Activated CD4-positive, alpha-beta T cell treated with anti-CD3 and anti-CD28 coated beads, Interleukin-2, amount 10 ng/mL, durations not matched to agents 7 days and 5 days (primary cell): ENCODE measurements at regions of chr1 and their contacts with region 1.

Region 1: DNA sequence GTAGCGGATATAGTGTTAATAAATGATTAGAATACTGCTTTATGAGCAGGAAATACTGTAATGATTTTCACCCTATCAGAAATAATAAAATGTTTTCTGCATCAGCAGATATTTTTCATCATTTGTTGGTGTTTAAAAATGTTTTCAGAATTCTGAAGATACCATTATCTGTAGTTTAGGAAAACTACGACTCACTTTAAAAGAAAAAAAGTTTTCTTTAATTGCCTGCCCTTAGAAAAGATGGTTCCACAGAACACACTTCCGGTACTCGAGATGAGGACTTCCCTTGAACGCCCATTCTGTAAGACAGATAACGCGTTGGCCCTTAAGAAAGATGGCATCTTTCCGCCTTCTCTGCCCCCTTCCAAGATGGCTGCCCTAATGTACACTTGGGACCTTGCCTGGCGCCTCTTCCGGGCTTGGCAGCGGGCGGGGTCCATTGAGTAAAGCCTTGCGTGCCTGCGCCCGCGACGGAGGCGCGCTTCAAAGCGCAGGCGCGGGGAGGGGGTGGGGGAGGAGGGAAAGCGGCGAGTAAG is at the start of gene SZRD1:
- DNase-seq: peak; percentile 98
- H3K4me3 Mint-ChIP-seq: peak within 1 kb of the TSS; percentile 97
- H3K27ac Mint-ChIP-seq: peak within 1 kb of the TSS; percentile 100
- H3K4me1 Mint-ChIP-seq: peaks cover 44% of the 10 kb centered on the region
- H3K27me3 Mint-ChIP-seq: no peaks in the 10 kb centered on the region
- total RNA-seq, gene SZRD1: 156 to 177 TPM

Region 2: GRCh38 chr1:16307222-16307621 is 59.6 kb before region 1 on chr1:
- CTCF ChIA-PET with region 1: interaction called, 3 read pairs
- POLR2A ChIA-PET with region 1: interaction called, 12 read pairs
- DNase-seq: no peak
- H3K4me3 Mint-ChIP-seq: no peak overlapping the region
- H3K27ac Mint-ChIP-seq: peak overlapping the region; percentile 2
- H3K4me1 Mint-ChIP-seq: no peaks in the 10 kb centered on the region
- H3K27me3 Mint-ChIP-seq: no peaks in the 10 kb centered on the region

Region 3: GRCh38 chr1:16334655-16335340 is 32.0 kb before region 1 on chr1:
- CTCF ChIA-PET with region 1: no interaction called
- POLR2A ChIA-PET with region 1: no interaction called
- DNase-seq: no peak
- H3K4me3 Mint-ChIP-seq: no peak overlapping the region
- H3K27ac Mint-ChIP-seq: no peak overlapping the region
- H3K4me1 Mint-ChIP-seq: peaks cover 17% of the 10 kb centered on the region
- H3K27me3 Mint-ChIP-seq: no peaks in the 10 kb centered on the region

Region 4: DNA sequence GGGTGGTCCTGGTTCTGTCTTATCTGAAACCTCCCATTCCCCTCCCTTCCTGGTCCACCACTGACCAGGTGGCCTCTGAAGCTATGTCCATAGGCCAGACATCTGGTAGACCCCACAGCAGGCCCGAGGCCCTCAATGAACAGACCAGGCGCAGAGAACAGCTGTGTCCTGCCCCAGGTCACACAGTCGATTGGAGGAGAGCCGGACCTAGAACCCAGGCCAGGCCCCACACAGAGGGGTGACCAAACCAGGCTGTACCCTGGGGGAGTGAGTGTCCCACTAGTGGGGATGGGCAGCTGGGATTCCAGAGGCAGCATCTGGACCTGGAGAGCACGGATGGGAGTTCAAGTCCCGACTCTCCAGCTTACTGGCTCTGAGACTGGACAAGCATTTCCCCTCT is 118.1 kb after region 1 on chr1:
- CTCF ChIA-PET with region 1: no interaction called
- POLR2A ChIA-PET with region 1: no interaction called
- DNase-seq: no peak
- H3K4me3 Mint-ChIP-seq: no peak overlapping the region
- H3K27ac Mint-ChIP-seq: no peak overlapping the region
- H3K4me1 Mint-ChIP-seq: no peaks in the 10 kb centered on the region
- H3K27me3 Mint-ChIP-seq: no peaks in the 10 kb centered on the region